Heart left ventricle (tissue), 16 donors: ENCODE measurements at regions of chr11 and their contacts with region 1.

Region 1: GRCh38 chr11:129323896-129324512 is 51.6 kb upstream of the BARX2 start:
- DNase-seq: peak in 3 of 5 donors; percentile 27 to 63 (median 43)
- ATAC-seq: peak; percentile 56 to 93 (median 86)
- H3K4me3 ChIP-seq: peak overlapping the region in 6 of 12 donors; percentile 1 to 29 (median 14)
- H3K27ac ChIP-seq: peak overlapping the region in 9 of 12 donors; percentile 16 to 70 (median 31)
- H3K4me1 ChIP-seq: peaks cover 0 to 32% (median 0%) of the 10 kb centered on the region in 12 donors
- H3K27me3 ChIP-seq: no peaks in the 10 kb centered on the region
- CTCF ChIP-seq: no peak
- POLR2A ChIP-seq: no peak

Region 2: GRCh38 chr11:128790196-128790595 is 533.8 kb before region 1 on chr11:
- intact Hi-C with region 1: no loop called
- DNase-seq: peak; percentile 79 to 83 (median 80)
- ATAC-seq: peak; percentile 74 to 94 (median 92)
- H3K4me3 ChIP-seq: no peak overlapping the region
- H3K27ac ChIP-seq: peak overlapping the region in 9 of 12 donors; percentile 14 to 66 (median 39)
- H3K4me1 ChIP-seq: peaks cover 0 to 34% (median 12%) of the 10 kb centered on the region in 12 donors
- H3K27me3 ChIP-seq: no peaks in the 10 kb centered on the region
- CTCF ChIP-seq: no peak
- POLR2A ChIP-seq: no peak

Region 3: GRCh38 chr11:129100193-129100592 is 223.8 kb before region 1 on chr11:
- intact Hi-C with region 1: no loop called
- DNase-seq: no peak
- ATAC-seq: no peak
- H3K4me3 ChIP-seq: no peak overlapping the region
- H3K27ac ChIP-seq: no peak overlapping the region
- H3K4me1 ChIP-seq: no peaks in the 10 kb centered on the region
- H3K27me3 ChIP-seq: no peaks in the 10 kb centered on the region
- CTCF ChIP-seq: no peak
- POLR2A ChIP-seq: no peak

Region 4: DNA sequence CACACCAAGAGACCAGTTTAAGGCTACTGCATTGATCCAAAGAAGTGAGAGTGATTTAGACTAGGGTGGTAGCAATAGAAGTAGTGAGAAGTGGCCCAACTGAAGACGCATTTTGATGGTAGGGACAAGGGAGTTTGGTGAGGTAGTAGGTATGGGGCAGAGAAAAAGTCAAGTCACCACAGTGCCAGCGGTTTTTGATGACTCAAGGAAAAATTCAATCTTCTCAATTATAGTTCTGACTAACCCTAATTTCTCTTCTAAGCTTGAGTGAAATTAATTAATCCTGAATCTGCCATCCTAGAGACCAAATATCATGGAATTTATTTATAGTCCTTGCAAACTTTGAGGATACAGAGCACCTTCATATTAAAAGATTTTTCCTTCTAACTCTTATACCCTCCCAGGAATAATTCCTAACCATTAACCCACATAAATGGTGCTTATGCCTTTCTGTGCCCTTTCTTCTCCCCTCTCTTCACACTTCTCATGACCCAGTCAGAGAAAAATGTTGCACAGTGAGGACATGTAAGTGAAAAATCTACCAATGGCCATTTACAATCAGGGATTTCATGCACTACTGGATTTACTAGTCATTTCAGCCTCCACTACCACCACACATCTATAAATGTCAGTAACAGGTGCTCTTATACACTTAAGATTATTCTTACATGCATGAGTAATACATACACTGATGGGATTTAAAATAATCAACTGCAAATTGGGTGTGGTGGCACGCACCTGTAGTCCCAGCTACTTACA is 85.9 kb before region 1 on chr11:
- intact Hi-C with region 1: loop called in 1 of 10 experiments (anchors 5 kb)
- DNase-seq: no peak
- ATAC-seq: no peak
- H3K4me3 ChIP-seq: no peak overlapping the region
- H3K27ac ChIP-seq: no peak overlapping the region
- H3K4me1 ChIP-seq: no peaks in the 10 kb centered on the region
- H3K27me3 ChIP-seq: no peaks in the 10 kb centered on the region
- CTCF ChIP-seq: no peak
- POLR2A ChIP-seq: no peak

Region 5: DNA sequence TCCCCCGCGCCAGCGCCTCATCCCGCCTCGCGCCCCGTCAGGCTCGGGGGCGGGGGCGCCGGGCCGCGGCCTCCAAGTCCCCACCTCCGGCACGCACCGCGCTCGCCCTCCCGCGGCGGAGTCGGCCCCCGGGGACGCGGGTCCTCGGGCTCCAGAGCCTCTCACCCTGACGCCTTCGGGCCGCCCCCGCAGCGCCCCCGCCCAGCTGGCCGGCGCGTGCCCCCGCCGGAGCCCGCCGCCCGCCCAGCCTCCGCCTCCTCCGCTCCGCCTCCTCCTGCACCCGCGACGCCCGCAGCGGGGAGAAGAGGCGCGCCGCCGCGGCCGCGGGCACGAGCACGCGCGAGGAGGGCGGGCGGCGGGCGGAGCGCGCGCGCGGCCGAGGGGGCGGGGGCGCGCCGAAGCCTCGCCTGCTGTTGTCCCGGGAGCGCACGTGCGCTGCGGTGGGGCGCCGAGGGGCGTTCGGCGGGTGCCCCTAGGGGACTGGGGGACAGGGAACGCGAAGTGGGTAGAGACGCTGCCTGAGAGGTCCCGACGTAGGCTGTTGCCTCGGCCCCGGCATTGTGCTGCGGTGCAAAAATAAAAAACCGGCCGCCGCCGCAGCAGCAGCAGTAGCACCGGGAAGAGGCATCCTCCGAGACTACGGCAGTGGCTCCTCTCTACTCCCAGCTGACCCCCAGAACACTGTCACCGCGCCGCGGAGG is 44.5 kb before region 1 on chr11:
- intact Hi-C with region 1: loop called in 2 of 10 experiments (anchors 5 kb)
- DNase-seq: peak; percentile 78 to 91 (median 83)
- ATAC-seq: peak; percentile 71 to 96 (median 94)
- H3K4me3 ChIP-seq: peak overlapping the region; percentile 37 to 86 (median 58)
- H3K27ac ChIP-seq: peak overlapping the region in 4 of 12 donors; percentile 36 to 67 (median 60)
- H3K4me1 ChIP-seq: peaks cover 0 to 37% (median 12%) of the 10 kb centered on the region in 12 donors
- H3K27me3 ChIP-seq: peaks cover 0 to 4% (median 0%) of the 10 kb centered on the region in 9 donors
- CTCF ChIP-seq: no peak
- POLR2A ChIP-seq: no peak

Region 6: GRCh38 chr11:129625930-129626329 is 301.9 kb after region 1 on chr11:
- intact Hi-C with region 1: no loop called
- DNase-seq: no peak
- ATAC-seq: no peak
- H3K4me3 ChIP-seq: no peak overlapping the region
- H3K27ac ChIP-seq: no peak overlapping the region
- H3K4me1 ChIP-seq: no peaks in the 10 kb centered on the region
- H3K27me3 ChIP-seq: no peaks in the 10 kb centered on the region
- CTCF ChIP-seq: no peak
- POLR2A ChIP-seq: no peak